Mammary epithelial cell (primary cell): ENCODE measurements at regions of chr4 and their contacts with region 1.

Region 1: DNA sequence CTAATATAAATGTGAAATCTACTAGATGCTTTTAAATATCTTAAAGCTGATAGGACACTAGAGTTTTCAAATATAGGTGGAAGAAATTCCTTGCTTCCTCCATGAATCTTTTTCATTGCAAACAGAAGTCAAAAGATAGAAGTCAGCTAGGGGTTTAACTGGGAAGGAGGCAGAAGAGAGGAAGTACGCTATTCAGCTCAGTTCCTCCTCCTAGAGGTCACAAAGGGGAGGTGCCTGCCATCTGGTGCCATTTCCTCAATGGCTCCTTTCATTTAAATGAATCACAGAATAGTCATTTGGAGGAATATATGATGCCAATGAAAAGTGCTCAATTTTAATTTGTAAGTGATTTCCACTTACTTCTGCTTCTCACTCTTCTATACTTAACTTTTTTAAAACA is 8.5 kb downstream of the COL25A1 start:
- DNase-seq: no peak
- H3K4me3 ChIP-seq: no peak overlapping the region
- H3K27ac ChIP-seq: no peak overlapping the region
- H3K4me1 ChIP-seq: no peaks in the 10 kb centered on the region
- H3K27me3 ChIP-seq: no peaks in the 10 kb centered on the region
- CTCF ChIP-seq: peak in 1 of 2 donors; percentile 17

Region 2: GRCh38 chr4:108683479-108683878 is 610.5 kb before region 1 on chr4:
- CTCF ChIA-PET with region 1: no interaction called
- dilution Hi-C with region 1: no loop called
- in situ Hi-C with region 1: no loop called
- intact Hi-C with region 1: loop called (anchors 10 kb)
- DNase-seq: peak; percentile 16
- H3K4me3 ChIP-seq: no peak overlapping the region
- H3K27ac ChIP-seq: no peak overlapping the region
- H3K4me1 ChIP-seq: no peaks in the 10 kb centered on the region
- H3K27me3 ChIP-seq: no peaks in the 10 kb centered on the region
- CTCF ChIP-seq: peak; percentile 29 to 39

Region 3: DNA sequence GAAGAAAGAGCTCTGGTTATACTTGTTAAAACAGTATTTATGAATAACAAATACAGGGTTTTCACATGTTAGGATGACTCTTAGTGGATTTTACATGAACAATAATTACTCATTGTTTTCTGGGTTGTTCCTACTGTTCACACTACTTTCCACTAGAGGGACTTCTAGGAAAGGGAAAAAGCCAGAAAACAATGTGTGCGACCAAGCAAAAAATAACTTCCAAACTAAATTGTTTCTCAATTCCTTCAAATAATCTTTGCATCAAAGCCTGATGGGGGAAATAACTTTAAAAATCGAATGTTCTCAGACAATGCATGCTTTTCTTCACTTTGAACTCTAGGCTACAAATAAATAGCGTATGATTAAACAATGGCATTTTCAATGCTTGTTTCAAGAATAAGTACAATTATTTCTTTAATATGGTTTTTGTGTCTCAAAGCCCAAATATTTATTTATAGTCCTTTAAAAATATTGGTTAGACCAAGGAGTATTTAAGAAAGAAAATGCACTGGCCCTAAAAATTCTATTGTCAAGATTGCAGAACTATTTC is 459.1 kb before region 1 on chr4:
- CTCF ChIA-PET with region 1: no interaction called
- dilution Hi-C with region 1: no loop called
- in situ Hi-C with region 1: no loop called
- intact Hi-C with region 1: loop called (anchors 2 kb)
- DNase-seq: peak; percentile 50
- H3K4me3 ChIP-seq: no peak overlapping the region
- H3K27ac ChIP-seq: no peak overlapping the region
- H3K4me1 ChIP-seq: peaks cover 12% of the 10 kb centered on the region
- H3K27me3 ChIP-seq: peaks cover 6% of the 10 kb centered on the region
- CTCF ChIP-seq: peak; percentile 72 to 74

Region 4: GRCh38 chr4:108849611-108850168 is 444.3 kb before region 1 on chr4:
- CTCF ChIA-PET with region 1: no interaction called
- dilution Hi-C with region 1: no loop called
- in situ Hi-C with region 1: no loop called
- intact Hi-C with region 1: loop called (anchors 5 kb)
- DNase-seq: no peak
- H3K4me3 ChIP-seq: no peak overlapping the region
- H3K27ac ChIP-seq: no peak overlapping the region
- H3K4me1 ChIP-seq: no peaks in the 10 kb centered on the region
- H3K27me3 ChIP-seq: peaks cover 3% of the 10 kb centered on the region
- CTCF ChIP-seq: no peak

Region 5: DNA sequence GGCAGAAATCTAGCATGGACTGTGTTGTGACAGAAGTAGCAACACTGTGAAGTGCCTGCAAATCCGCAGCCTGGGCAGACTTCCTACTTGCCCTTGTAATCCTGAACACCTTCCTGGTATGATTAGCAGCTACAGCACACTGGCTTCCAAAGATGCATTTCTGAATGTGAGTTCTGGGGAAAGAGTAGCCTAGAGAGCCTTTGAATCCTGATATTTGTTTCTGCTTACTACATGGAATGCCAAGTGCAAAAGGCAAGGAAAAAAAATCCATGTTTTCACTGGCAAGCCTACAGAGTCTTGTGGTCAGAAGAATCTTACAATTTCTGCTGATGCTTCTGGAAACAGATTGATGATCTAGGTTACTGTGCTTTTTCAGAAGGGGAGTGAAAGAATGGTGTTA is 215.3 kb before region 1 on chr4:
- CTCF ChIA-PET with region 1: no interaction called
- dilution Hi-C with region 1: no loop called
- in situ Hi-C with region 1: no loop called
- intact Hi-C with region 1: loop called (anchors 10 kb)
- DNase-seq: no peak
- H3K4me3 ChIP-seq: no peak overlapping the region
- H3K27ac ChIP-seq: no peak overlapping the region
- H3K4me1 ChIP-seq: no peaks in the 10 kb centered on the region
- H3K27me3 ChIP-seq: no peaks in the 10 kb centered on the region
- CTCF ChIP-seq: no peak

Region 6: DNA sequence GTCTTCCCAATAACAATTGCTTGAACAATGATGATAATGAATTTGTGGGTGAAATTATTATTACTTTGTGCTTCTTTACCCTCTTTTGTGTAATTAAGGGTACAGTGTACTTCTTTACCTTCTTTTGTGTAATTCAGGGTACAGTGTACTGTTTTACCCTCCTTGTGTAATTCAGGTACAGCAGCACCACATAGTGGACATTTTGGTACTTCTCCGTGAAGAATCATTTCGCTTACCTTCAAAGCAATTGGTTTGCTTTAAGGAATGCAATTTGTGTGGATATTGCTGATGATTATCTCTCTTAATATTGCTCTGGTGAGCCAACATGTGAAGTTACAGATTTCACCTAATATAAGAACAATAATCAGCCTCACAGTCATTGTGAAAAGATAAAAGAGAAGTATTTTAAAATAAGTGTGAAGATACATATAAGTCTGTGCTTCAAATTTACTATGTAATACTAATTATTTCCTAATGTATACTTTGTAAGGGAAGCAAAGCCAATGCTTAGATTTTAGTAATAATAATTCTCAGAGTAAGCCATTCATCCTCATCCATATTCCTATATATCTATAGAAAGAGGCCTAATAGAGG is 112.4 kb after region 1 on chr4:
- CTCF ChIA-PET with region 1: no interaction called
- dilution Hi-C with region 1: no loop called
- in situ Hi-C with region 1: no loop called
- intact Hi-C with region 1: loop called (anchors 2 kb)
- DNase-seq: peak; percentile 49
- H3K4me3 ChIP-seq: no peak overlapping the region
- H3K27ac ChIP-seq: no peak overlapping the region
- H3K4me1 ChIP-seq: peaks cover 9% of the 10 kb centered on the region
- H3K27me3 ChIP-seq: peaks cover 4% of the 10 kb centered on the region
- CTCF ChIP-seq: peak; percentile 77 to 84